ENCODE measurements at regions of chr3 and their contacts with region 1.

Region 1: DNA sequence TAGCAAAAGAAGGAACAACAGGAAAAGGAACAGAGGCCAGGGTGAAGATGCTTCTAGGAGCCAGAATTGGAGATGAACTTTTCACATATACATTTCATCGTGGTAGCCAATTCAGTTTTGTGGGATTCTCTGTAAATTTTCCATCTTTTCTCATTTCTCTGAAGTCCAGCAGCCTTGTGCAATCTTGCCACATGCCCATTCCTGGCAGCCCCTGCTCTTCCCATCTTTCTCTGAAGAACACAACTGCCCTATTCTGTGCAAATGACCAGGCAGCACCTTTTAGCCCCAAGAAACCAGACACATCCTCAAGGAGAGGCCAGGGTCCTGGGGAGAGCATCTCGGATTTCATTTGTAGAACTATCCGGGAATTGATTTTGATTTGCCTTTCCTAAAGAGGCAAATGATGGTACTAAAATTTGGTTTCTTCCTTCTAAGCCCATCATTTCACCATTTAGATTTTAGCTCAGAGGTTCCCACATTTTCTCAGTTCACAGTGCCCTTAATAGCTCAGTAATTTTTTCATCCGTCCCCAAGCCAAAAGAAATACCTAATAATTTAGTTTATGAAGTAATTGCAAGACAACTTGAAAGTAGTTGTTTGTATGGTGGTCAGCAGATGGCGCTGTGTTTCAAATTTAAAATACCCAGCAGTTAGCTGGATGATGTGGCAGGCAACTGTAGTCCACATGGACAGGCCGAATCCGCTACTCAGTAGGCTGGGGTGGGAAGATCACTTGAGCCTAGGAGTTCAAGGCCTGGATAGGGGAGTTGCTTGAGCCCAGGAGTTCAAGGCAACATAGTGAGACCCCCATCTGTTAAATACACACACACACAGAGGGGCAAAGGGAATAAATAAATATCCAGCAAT is 61.3 kb upstream of the ACKR4 start:
- DNase-seq: peak in 7 of 9 experiments; percentile 32 to 67 (median 46)
- ATAC-seq: no peak
- H3K4me3 ChIP-seq: no peak overlapping the region
- H3K4me3 Mint-ChIP-seq: no peak overlapping the region
- H3K27ac ChIP-seq: no peak overlapping the region
- H3K27ac Mint-ChIP-seq: no peak overlapping the region
- H3K4me1 ChIP-seq: no peaks in the 10 kb centered on the region
- H3K4me1 Mint-ChIP-seq: no peaks in the 10 kb centered on the region
- H3K27me3 ChIP-seq: no peaks in the 10 kb centered on the region
- H3K27me3 Mint-ChIP-seq: no peaks in the 10 kb centered on the region
- CTCF ChIP-seq: peak; percentile 80

Region 2: DNA sequence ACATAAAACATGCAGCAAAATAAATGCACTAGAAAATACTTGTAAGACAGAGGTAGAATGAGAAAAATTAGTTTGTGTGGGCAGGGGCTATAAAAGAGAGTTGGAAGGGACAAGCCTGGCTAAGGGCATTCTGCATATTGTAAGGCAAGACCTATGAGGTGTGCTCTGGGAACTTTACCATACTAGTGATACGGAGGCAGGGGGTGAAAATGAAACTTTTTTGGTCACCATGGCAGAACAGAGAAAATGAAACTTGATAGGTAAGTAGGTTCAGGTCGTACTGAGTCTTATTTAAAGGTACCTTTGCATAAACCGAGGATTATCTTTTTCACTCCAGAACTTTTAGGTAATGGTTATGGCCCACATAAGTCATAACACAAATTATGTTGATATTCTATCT is 13.5 kb before region 1 on chr3:
- CTCF ChIA-PET with region 1: interaction called, 26 read pairs
- POLR2A ChIA-PET with region 1: interaction called, 3 read pairs
- intact Hi-C with region 1: no loop called
- DNase-seq: no peak
- ATAC-seq: no peak
- H3K4me3 ChIP-seq: no peak overlapping the region
- H3K4me3 Mint-ChIP-seq: no peak overlapping the region
- H3K27ac ChIP-seq: no peak overlapping the region
- H3K27ac Mint-ChIP-seq: peak overlapping the region; percentile 39
- H3K4me1 ChIP-seq: no peaks in the 10 kb centered on the region
- H3K4me1 Mint-ChIP-seq: no peaks in the 10 kb centered on the region
- H3K27me3 ChIP-seq: no peaks in the 10 kb centered on the region
- H3K27me3 Mint-ChIP-seq: no peaks in the 10 kb centered on the region
- CTCF ChIP-seq: no peak

Region 3: DNA sequence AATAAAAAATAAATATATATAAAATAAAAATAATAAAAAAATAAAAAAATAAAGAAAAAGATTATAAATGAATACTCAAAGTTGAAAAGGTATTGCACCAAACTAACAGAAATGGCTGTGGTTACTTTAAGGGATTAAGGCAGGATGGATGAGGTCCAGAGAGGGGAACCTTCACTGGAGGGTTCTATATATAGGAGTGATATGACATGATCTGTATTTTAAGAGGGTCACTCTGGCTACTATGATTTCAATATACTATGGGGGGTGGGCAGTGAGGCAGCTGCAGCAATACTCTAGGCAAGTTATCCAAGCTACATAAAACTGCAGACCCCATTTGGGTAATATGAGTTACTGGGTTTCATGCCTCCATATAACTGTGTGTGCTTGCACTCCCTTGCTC is 99.2 kb after region 1 on chr3:
- CTCF ChIA-PET with region 1: interaction called, 16 read pairs
- POLR2A ChIA-PET with region 1: no interaction called
- intact Hi-C with region 1: no loop called
- DNase-seq: no peak
- ATAC-seq: no peak
- H3K4me3 ChIP-seq: no peak overlapping the region
- H3K4me3 Mint-ChIP-seq: no peak overlapping the region
- H3K27ac ChIP-seq: no peak overlapping the region
- H3K27ac Mint-ChIP-seq: no peak overlapping the region
- H3K4me1 ChIP-seq: no peaks in the 10 kb centered on the region
- H3K4me1 Mint-ChIP-seq: no peaks in the 10 kb centered on the region
- H3K27me3 ChIP-seq: no peaks in the 10 kb centered on the region
- H3K27me3 Mint-ChIP-seq: no peaks in the 10 kb centered on the region
- CTCF ChIP-seq: no peak

Region 4: GRCh38 chr3:132641837-132642538 is 106.2 kb after region 1 on chr3:
- CTCF ChIA-PET with region 1: interaction called, 45 read pairs
- POLR2A ChIA-PET with region 1: interaction called, 3 read pairs
- intact Hi-C with region 1: loop called (anchors 1 kb)
- DNase-seq: peak in 2 of 9 experiments; percentile 39 to 55
- ATAC-seq: peak; percentile 54
- H3K4me3 ChIP-seq: no peak overlapping the region
- H3K4me3 Mint-ChIP-seq: no peak overlapping the region
- H3K27ac ChIP-seq: no peak overlapping the region
- H3K27ac Mint-ChIP-seq: no peak overlapping the region
- H3K4me1 ChIP-seq: no peaks in the 10 kb centered on the region
- H3K4me1 Mint-ChIP-seq: peaks cover 5% of the 10 kb centered on the region
- H3K27me3 ChIP-seq: no peaks in the 10 kb centered on the region
- H3K27me3 Mint-ChIP-seq: no peaks in the 10 kb centered on the region
- CTCF ChIP-seq: peak; percentile 85

Region 5: DNA sequence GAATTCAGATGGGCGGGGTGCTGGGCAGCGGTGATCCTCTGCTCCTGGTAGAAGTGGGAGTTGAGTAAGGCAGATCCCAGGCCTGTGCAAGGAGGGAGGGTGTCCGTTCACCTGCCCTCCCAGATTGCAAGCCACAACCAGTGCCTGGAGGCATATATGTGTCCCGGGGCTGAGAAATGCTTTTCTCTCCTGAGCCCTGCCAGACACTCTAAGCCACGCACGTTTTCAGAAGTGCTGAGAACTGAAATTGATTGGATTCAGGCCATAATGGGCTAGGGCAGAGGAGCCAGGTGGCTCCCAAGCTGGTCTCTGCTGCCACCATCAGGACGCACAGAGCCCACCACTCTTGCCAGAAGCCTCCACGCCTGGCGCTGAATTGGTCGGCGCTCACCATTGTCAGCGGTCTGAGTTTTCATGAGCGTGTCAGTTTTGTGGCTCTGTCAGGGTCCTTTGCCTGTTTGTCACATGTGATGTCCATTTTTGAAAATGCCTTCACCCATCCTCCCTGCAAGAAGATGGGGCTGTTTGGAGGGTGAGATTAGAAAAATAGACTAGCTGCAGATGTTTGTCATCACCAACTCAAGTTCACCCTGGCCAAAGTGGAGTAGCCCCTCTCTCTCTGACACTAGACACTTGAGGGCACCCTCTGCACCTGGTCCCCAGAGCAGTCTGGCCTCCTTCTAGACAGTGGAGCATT is 848.7 kb after region 1 on chr3:
- CTCF ChIA-PET with region 1: no interaction called
- POLR2A ChIA-PET with region 1: no interaction called
- intact Hi-C with region 1: loop called in 1 of 2 experiments (anchors 10 kb)
- DNase-seq: peak in 1 of 9 experiments; percentile 12
- ATAC-seq: no peak
- H3K4me3 ChIP-seq: no peak overlapping the region
- H3K4me3 Mint-ChIP-seq: no peak overlapping the region
- H3K27ac ChIP-seq: no peak overlapping the region
- H3K27ac Mint-ChIP-seq: no peak overlapping the region
- H3K4me1 ChIP-seq: no peaks in the 10 kb centered on the region
- H3K4me1 Mint-ChIP-seq: no peaks in the 10 kb centered on the region
- H3K27me3 ChIP-seq: no peaks in the 10 kb centered on the region
- H3K27me3 Mint-ChIP-seq: no peaks in the 10 kb centered on the region
- CTCF ChIP-seq: no peak

Region 6: DNA sequence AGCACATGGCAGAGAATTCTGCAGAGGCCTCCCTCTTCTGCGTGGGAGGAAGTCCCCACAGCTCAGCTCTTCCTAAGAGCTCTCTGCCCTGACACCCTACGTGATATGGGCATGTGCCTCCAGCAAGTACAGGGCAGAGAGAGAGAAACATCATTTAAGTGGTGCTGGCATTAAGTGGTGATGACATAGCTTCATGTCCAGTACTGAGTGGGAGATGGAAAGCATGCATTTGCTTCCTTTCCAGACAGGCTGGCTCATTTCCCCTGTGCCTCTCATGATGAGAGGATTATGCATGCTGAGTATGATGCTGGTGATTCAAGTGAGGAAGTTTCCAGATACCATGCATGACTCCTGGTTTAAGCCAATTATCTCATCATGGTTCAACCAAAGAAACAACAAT is 890.9 kb after region 1 on chr3:
- CTCF ChIA-PET with region 1: no interaction called
- POLR2A ChIA-PET with region 1: no interaction called
- intact Hi-C with region 1: loop called in 1 of 2 experiments (anchors 10 kb)
- DNase-seq: no peak
- ATAC-seq: no peak
- H3K4me3 ChIP-seq: no peak overlapping the region
- H3K4me3 Mint-ChIP-seq: no peak overlapping the region
- H3K27ac ChIP-seq: no peak overlapping the region
- H3K27ac Mint-ChIP-seq: no peak overlapping the region
- H3K4me1 ChIP-seq: no peaks in the 10 kb centered on the region
- H3K4me1 Mint-ChIP-seq: peaks cover 4% of the 10 kb centered on the region
- H3K27me3 ChIP-seq: no peaks in the 10 kb centered on the region
- H3K27me3 Mint-ChIP-seq: no peaks in the 10 kb centered on the region
- CTCF ChIP-seq: no peak

Measured in CD8-positive, alpha-beta T cell (primary cell).